Heart right ventricle (tissue), 16 donors: ENCODE measurements at regions of chr1 and their contacts with region 1.

Region 1: GRCh38 chr1:81414488-81415015 is 386.2 kb upstream of the ADGRL2 start:
- DNase-seq: peak; percentile 82 to 83
- ATAC-seq: peak; percentile 84 to 94 (median 92)
- H3K4me3 ChIP-seq: no peak overlapping the region
- H3K27ac ChIP-seq: peak overlapping the region in 9 of 10 donors; percentile 15 to 71 (median 46)
- H3K4me1 ChIP-seq: peaks cover 0 to 40% (median 18%) of the 10 kb centered on the region in 9 donors
- H3K27me3 ChIP-seq: no peaks in the 10 kb centered on the region
- CTCF ChIP-seq: peak; percentile 61 to 95 (median 91)

Region 2: DNA sequence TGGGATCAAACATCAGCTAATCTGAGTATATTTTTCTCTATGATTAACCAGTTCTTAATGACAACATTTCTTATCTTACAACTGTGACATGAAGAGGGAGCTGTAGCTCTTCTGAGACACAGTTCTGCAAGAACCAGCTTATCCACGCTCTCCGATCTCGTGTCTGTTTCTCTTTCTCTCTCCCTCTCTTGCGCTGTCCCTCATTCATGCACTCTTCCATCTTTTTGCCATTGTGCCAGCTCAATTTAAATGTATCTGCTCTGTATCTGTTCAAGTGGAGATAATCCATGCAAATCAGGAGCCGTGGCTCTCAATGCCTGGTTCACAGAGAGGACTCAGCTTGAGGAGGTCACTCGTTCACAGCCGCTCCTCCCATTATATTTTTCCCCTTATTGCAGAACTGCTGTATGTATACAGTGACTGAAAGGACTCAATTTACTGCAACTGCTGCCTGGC is 108.5 kb before region 1 on chr1:
- intact Hi-C with region 1: loop called in 6 of 10 experiments (anchors 5 to 10 kb)
- DNase-seq: peak in 1 of 2 donors; percentile 24
- ATAC-seq: peak; percentile 84 to 94 (median 91)
- H3K4me3 ChIP-seq: peak overlapping the region; percentile 26 to 64 (median 55)
- H3K27ac ChIP-seq: peak overlapping the region in 6 of 10 donors; percentile 13 to 55 (median 18)
- H3K4me1 ChIP-seq: no peaks in the 10 kb centered on the region
- H3K27me3 ChIP-seq: no peaks in the 10 kb centered on the region
- CTCF ChIP-seq: peak in 8 of 9 donors; percentile 32 to 76 (median 56)

Region 3: GRCh38 chr1:81498471-81499462 is 84.2 kb after region 1 on chr1:
- intact Hi-C with region 1: loop called in 2 of 10 experiments (anchors 5 to 10 kb)
- DNase-seq: no peak
- ATAC-seq: peak in 4 of 8 donors; percentile 63 to 82 (median 67)
- H3K4me3 ChIP-seq: no peak overlapping the region
- H3K27ac ChIP-seq: peak overlapping the region in 5 of 10 donors; percentile 11 to 54 (median 44)
- H3K4me1 ChIP-seq: peaks cover 3 to 30% (median 23%) of the 10 kb centered on the region in 9 donors
- H3K27me3 ChIP-seq: no peaks in the 10 kb centered on the region
- CTCF ChIP-seq: no peak

Region 4: GRCh38 chr1:81617308-81617967 is 202.9 kb after region 1 on chr1:
- intact Hi-C with region 1: loop called in 1 of 10 experiments (anchors 10 kb)
- DNase-seq: no peak
- ATAC-seq: peak in 4 of 8 donors; percentile 24 to 42 (median 34)
- H3K4me3 ChIP-seq: peak overlapping the region in 1 of 10 donors; percentile 6
- H3K27ac ChIP-seq: no peak overlapping the region
- H3K4me1 ChIP-seq: no peaks in the 10 kb centered on the region
- H3K27me3 ChIP-seq: no peaks in the 10 kb centered on the region
- CTCF ChIP-seq: no peak

Region 5: GRCh38 chr1:81800695-81801650 is 386.4 kb after region 1 on chr1 and contains the start of gene ADGRL2:
- intact Hi-C with region 1: loop called in 6 of 10 experiments (anchors 2 to 10 kb)
- DNase-seq: peak; percentile 74 to 91
- ATAC-seq: peak; percentile 84 to 92 (median 88)
- H3K4me3 ChIP-seq: peak within 1 kb of the TSS; percentile 70 to 99 (median 92)
- H3K27ac ChIP-seq: peak within 1 kb of the TSS; percentile 93 to 99 (median 98)
- H3K4me1 ChIP-seq: peaks cover 0 to 37% (median 18%) of the 10 kb centered on the region in 9 donors
- H3K27me3 ChIP-seq: peaks cover 0 to 46% (median 0%) of the 10 kb centered on the region in 7 donors
- CTCF ChIP-seq: no peak
- total RNA-seq, gene ADGRL2: 40.0 to 58.7 (median 49.3) TPM

Region 6: DNA sequence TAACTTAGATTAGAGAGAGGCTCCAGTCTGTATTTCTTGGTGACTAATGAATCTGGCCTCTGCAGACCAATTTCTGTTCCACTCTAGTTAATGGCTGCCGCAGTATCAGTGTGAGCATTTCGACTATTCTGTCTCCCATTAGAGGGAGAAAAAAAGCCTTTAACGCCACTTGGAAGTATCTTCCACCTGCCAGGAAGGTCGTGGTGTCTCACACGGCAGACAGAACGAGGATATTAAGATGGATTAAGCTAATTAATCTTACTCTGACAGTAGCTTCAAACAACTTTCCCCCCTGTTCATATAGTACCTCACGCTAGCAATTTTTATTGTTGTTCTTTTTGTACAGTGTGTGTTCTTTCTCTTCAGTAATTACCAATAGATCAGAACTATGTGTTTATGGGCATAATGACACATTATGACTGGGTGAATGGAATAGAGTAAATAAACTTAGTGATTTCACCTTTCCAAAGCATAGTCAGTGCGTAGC is 540.0 kb after region 1 on chr1:
- intact Hi-C with region 1: no loop called
- DNase-seq: no peak
- ATAC-seq: no peak
- H3K4me3 ChIP-seq: no peak overlapping the region
- H3K27ac ChIP-seq: no peak overlapping the region
- H3K4me1 ChIP-seq: peaks cover 0 to 18% (median 4%) of the 10 kb centered on the region in 9 donors
- H3K27me3 ChIP-seq: no peaks in the 10 kb centered on the region
- CTCF ChIP-seq: no peak